ENCODE measurements at regions of chr4 and their contacts with region 1.

Region 1: DNA sequence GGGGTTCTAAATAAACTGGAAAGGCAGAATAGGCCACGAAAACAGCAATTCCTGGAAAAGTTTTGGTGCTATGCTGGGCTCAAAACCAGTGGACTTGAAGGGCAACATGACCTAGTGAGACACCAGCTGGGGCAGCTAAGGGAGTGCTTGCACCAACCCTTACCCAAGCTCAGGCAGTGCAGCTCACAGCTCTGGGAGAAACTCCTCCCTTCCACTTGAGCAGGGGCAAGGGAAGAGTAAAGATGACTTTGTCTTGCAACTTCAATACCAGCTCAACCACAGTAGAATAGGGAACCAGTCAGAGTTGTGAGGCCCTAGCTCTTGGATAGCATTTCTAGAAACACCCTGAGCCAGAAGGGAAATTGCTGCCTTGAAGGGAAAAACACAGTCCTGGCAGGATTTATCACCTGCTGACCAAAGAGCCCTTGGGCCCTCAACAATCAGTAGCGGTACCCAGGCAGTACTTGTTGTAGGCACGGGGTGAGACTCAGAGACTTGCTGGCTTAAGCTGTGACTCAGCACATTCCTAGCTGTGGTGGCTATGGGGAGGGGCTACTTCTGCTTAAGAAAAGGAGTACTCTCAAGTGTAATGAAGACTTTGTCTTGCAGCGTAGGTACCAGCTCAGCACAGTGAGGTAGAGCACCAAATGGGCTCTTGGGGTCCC is 19.7 kb upstream of the ABCG2 start:
- DNase-seq: peak; percentile 46 to 91
- ATAC-seq: peak; percentile 94 to 99
- H3K4me3 ChIP-seq: no peak overlapping the region
- H3K27ac ChIP-seq: peak overlapping the region; percentile 89 to 92
- H3K4me1 ChIP-seq: peaks cover 14% of the 10 kb centered on the region
- CTCF ChIP-seq: no peak
- EP300 ChIP-seq: no peak
- POLR2A ChIP-seq: no peak
- RAD21 ChIP-seq: no peak

Region 2: GRCh38 chr4:88158489-88159243 is 19.4 kb before region 1 on chr4 and contains the start of gene ABCG2:
- CTCF ChIA-PET with region 1: interaction called, 4 read pairs
- POLR2A ChIA-PET with region 1: interaction called, 12 read pairs
- DNase-seq: peak; percentile 29 to 62
- ATAC-seq: peak; percentile 86 to 89
- H3K4me3 ChIP-seq: peak within 1 kb of the TSS; percentile 64
- H3K27ac ChIP-seq: peak within 1 kb of the TSS; percentile 89 to 94
- H3K4me1 ChIP-seq: peaks cover 28% of the 10 kb centered on the region
- CTCF ChIP-seq: no peak
- EP300 ChIP-seq: no peak
- POLR2A ChIP-seq: peak; percentile 74
- RAD21 ChIP-seq: peak in 1 of 2 experiments; percentile 11; a peak in 1 of 5 replicates
- polyA plus RNA-seq, gene ABCG2: 53.5 and 55.3 TPM in 2 replicates

Measured in A549 (cell line).